ENCODE measurements at regions of chr16 and their contacts with region 1.

Region 1: DNA sequence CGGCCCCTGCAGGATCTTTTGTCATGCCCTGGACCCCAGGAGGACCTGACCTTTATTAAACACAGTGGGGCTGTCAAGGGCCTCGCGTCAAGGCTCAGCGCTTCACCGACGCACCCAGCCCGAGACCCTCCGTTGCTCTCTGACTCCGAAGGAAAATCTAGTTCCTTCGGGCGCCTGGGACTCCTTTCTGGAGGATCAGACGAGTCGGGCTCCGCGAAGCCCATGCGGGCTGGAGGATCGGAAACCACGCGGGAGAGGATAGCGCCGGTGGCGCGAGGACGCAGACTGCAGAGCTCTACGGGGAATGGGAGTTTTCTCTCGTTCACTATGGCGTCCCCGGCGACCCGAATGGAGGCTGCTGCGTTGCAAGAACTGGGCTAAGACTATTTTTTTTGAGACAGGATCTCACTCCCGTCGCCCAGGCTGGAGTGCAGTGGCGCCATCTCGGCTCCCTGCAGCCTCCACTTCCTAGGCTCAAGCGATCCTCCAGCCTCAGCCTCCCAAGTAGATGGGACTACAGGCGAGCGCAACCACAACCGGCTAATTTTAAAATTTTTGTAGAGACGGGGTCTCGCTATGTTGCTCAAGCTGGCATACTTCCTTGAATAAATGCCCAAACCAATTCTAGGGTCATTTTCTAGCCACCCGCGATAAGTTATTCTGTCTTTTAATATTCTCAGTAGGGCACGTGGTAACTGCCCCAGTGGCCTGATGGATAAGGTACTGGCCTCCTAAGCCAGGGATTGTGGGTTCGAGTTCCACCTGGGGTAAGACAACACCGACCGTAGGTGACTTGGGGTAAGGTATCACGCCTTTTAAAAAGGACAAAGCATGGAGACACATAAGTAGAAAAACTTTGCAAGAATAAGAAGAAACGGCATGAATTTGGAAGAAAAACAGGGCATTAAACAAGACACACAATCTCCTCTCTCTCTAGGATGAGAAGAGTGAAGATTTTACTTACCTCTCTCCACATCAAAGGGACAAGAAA is 5.5 kb downstream of the OR1F1 start:
- DNase-seq: no peak
- H3K4me3 ChIP-seq: no peak overlapping the region
- H3K4me3 Mint-ChIP-seq: peak overlapping the region in 1 of 2 donors; percentile 83
- H3K27ac ChIP-seq: no peak overlapping the region
- H3K27ac Mint-ChIP-seq: no peak overlapping the region
- H3K4me1 ChIP-seq: peaks cover 12 to 15% of the 10 kb centered on the region in 2 donors
- H3K4me1 Mint-ChIP-seq: peaks cover 22% of the 10 kb centered on the region
- H3K27me3 ChIP-seq: peaks cover 53 to 91% of the 10 kb centered on the region in 2 donors
- H3K27me3 Mint-ChIP-seq: peaks cover 66 to 95% (median 93%) of the 10 kb centered on the region in 3 donors
- CTCF ChIP-seq: no peak

Region 2: GRCh38 chr16:1377406-1378010 is 1816.0 kb before region 1 on chr16:
- intact Hi-C with region 1: no loop called
- DNase-seq: no peak
- H3K4me3 ChIP-seq: no peak overlapping the region
- H3K4me3 Mint-ChIP-seq: no peak overlapping the region
- H3K27ac ChIP-seq: no peak overlapping the region
- H3K27ac Mint-ChIP-seq: no peak overlapping the region
- H3K4me1 ChIP-seq: peaks cover 12 to 22% of the 10 kb centered on the region in 2 donors
- H3K4me1 Mint-ChIP-seq: peaks cover 17% of the 10 kb centered on the region
- H3K27me3 ChIP-seq: no peaks in the 10 kb centered on the region
- H3K27me3 Mint-ChIP-seq: peaks cover 1 to 3% (median 2%) of the 10 kb centered on the region in 3 donors
- CTCF ChIP-seq: no peak

Region 3: DNA sequence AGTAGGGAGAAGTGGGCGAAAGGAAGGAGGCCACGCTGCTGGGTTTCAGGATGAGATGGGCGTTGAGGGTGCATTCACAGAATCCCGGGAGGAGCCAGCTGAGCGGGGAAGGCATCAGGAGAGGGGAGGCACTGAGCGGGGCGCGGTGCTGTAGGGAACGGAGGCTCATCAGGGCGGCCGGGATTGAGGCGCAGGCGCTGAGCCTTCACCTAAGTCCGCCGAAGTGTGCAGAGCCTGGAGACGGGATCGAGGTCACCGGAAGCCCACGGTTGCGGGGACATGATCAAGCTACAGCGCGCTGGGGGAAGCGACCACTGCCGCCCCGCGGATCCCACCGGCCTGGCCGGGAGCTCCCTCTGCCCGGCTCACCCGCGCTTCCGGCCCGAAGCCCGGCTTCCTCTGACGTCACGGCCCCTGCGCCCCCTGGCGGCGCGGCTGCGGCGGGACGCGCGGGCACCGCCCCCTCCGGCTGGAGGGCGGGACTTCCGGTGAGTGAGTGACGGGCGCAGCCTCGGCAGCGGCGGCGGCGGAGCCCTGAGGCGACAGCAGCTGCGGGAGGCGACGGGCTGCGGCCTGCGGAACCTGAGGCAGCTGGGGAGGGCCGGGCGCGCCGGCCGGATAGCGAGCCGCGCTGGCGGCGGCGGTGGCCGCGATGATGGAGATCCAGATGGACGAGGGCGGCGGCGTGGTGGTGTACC is 1487.7 kb before region 1 on chr16 and contains the start of gene MAPK8IP3:
- intact Hi-C with region 1: no loop called
- DNase-seq: peak; percentile 86 to 92 (median 87)
- H3K4me3 ChIP-seq: peak within 1 kb of the TSS; percentile 94 to 97 (median 96)
- H3K4me3 Mint-ChIP-seq: peak within 1 kb of the TSS; percentile 96 to 99
- H3K27ac ChIP-seq: peak within 1 kb of the TSS; percentile 72 to 94
- H3K27ac Mint-ChIP-seq: peak within 1 kb of the TSS; percentile 91 to 100 (median 98)
- H3K4me1 ChIP-seq: peaks cover 22 to 26% of the 10 kb centered on the region in 2 donors
- H3K4me1 Mint-ChIP-seq: peaks cover 37% of the 10 kb centered on the region
- H3K27me3 ChIP-seq: no peaks in the 10 kb centered on the region
- H3K27me3 Mint-ChIP-seq: no peaks in the 10 kb centered on the region
- CTCF ChIP-seq: peak; percentile 95
- polyA plus RNA-seq, gene MAPK8IP3: 1.1 to 185 (median 2.1) TPM

Region 4: DNA sequence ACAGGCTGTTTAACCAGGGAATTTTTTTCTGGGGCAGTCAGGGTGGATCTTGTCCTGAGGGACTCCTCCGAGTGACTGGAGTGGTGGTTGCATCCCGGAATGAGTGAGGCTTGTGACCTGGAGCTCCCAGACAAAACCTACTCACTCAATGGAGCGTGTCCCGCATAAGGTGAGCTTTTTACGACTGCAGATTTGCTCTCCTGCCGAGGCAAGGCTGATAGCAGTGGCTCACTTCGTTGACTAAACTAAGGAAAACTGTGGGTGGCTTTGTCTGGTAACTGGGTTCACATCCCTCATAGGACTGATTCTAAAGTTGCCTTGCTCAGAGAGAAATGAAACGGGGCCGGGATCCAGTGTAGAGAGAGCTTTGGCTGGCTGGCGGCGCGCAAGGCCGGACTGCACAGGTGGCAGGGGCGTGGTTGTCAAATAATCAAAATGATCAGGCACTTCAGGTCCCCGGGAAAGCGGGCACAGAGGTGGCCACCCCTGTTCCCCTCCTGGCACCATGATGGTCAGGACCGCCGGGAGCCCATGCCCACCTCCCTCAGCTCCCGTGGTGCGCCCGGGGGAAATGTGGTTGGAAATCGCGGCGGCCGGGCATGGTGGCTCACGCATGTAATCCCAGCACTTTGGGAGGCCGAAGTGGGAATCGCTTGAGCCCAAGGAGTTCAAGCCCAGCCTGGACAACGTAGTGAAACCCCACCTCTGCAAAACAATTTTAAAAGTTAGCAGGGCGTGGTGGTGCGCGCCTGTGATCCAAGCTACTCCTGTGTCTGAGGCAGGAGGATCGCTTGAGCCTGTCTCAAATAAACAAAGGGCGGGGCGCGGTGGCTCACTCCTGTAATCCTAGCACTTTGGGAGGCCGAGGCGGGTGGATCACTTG is 32.1 kb before region 1 on chr16:
- intact Hi-C with region 1: loop called in 1 of 2 experiments (anchors 1 kb)
- DNase-seq: no peak
- H3K4me3 ChIP-seq: no peak overlapping the region
- H3K4me3 Mint-ChIP-seq: peak overlapping the region in 1 of 2 donors; percentile 79
- H3K27ac ChIP-seq: no peak overlapping the region
- H3K27ac Mint-ChIP-seq: no peak overlapping the region
- H3K4me1 ChIP-seq: peaks cover 30 to 36% of the 10 kb centered on the region in 2 donors
- H3K4me1 Mint-ChIP-seq: peaks cover 41% of the 10 kb centered on the region
- H3K27me3 ChIP-seq: peaks cover 5 to 50% of the 10 kb centered on the region in 2 donors
- H3K27me3 Mint-ChIP-seq: peaks cover 70 to 92% (median 73%) of the 10 kb centered on the region in 3 donors
- CTCF ChIP-seq: no peak

Region 5: GRCh38 chr16:3256146-3256865 is 62.8 kb after region 1 on chr16 and contains the start of gene MEFV:
- intact Hi-C with region 1: no loop called
- DNase-seq: peak; percentile 76 to 93 (median 92)
- H3K4me3 ChIP-seq: peak within 1 kb of the TSS; percentile 85 to 98 (median 92)
- H3K4me3 Mint-ChIP-seq: peak within 1 kb of the TSS; percentile 97 to 99
- H3K27ac ChIP-seq: peak within 1 kb of the TSS; percentile 90 to 98
- H3K27ac Mint-ChIP-seq: peak within 1 kb of the TSS; percentile 93 to 99 (median 98)
- H3K4me1 ChIP-seq: peaks cover 87 to 96% of the 10 kb centered on the region in 2 donors
- H3K4me1 Mint-ChIP-seq: peaks cover 95% of the 10 kb centered on the region
- H3K27me3 ChIP-seq: no peaks in the 10 kb centered on the region
- H3K27me3 Mint-ChIP-seq: peaks cover 0 to 2% (median 0%) of the 10 kb centered on the region in 3 donors
- CTCF ChIP-seq: no peak
- polyA plus RNA-seq, gene MEFV: 37.7 to 78.0 (median 73.2) TPM

Region 6: GRCh38 chr16:3520413-3520812 is 326.9 kb after region 1 on chr16:
- intact Hi-C with region 1: no loop called
- DNase-seq: no peak
- H3K4me3 ChIP-seq: no peak overlapping the region
- H3K4me3 Mint-ChIP-seq: no peak overlapping the region
- H3K27ac ChIP-seq: no peak overlapping the region
- H3K27ac Mint-ChIP-seq: no peak overlapping the region
- H3K4me1 ChIP-seq: no peaks in the 10 kb centered on the region
- H3K4me1 Mint-ChIP-seq: no peaks in the 10 kb centered on the region
- H3K27me3 ChIP-seq: no peaks in the 10 kb centered on the region
- H3K27me3 Mint-ChIP-seq: no peaks in the 10 kb centered on the region
- CTCF ChIP-seq: no peak

Measured in CD14-positive monocyte (primary cell).